Activated T-helper 2 cell treated with anti-CD3 and anti-CD28 coated beads, Interferon-gamma antibody, Interleukin-2, Interleukin-4, amounts not matched to agents 10 μg/mL and 5 μg/mL and 100 μg/mL, durations not matched to agents 14 hours and 24 hours and 36 hours (primary cell): ENCODE measurements at regions of chr4 and their contacts with region 1.

Region 1: DNA sequence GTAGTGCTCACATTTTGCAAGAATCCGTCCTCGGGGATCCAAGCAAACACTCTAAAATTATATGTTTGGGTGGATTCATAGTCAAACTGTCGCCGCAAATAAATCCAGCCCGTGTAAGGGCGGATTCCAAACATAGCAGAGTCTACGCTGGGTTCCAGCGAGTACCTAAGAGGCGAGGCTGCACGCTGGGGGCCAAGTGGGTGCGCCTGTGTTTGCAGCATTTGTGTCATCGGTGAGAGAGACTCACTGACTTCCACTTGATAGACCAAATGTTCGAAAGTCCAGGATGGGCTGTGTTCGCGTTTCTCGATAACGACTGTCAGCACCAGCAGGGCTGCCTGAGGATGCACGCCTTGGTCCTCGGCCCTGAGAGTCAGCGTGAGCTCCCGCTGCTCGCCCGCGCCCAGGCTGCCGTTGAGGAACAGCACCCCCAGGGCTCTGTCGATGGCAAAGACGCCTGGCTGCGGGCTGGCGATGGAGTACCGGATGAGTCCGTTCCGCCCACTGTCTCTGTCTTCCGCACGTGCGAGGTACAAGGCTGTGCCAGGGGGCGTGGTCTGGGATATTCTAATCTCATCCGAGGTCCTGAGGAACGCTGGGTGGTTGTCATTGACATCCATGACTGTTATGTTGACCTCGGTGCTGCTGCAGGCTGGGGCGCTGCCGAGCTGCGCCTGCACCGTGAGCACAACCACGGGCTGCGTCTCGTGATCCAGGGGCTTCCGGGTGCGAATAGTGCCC is 158.7 kb downstream of the DCHS2 start:
- DNase-seq: peak; percentile 48
- H3K4me3 Mint-ChIP-seq: peak overlapping the region; percentile 61
- H3K27ac Mint-ChIP-seq: no peak overlapping the region
- H3K4me1 Mint-ChIP-seq: peaks cover 7% of the 10 kb centered on the region
- H3K27me3 Mint-ChIP-seq: peaks cover 35% of the 10 kb centered on the region

Region 2: GRCh38 chr4:153791746-153792617 is 540.9 kb before region 1 on chr4:
- intact Hi-C with region 1: loop called (anchors 5 kb)
- DNase-seq: no peak
- H3K4me3 Mint-ChIP-seq: no peak overlapping the region
- H3K27ac Mint-ChIP-seq: no peak overlapping the region
- H3K4me1 Mint-ChIP-seq: peaks cover 16% of the 10 kb centered on the region
- H3K27me3 Mint-ChIP-seq: peaks cover 89% of the 10 kb centered on the region

Region 3: DNA sequence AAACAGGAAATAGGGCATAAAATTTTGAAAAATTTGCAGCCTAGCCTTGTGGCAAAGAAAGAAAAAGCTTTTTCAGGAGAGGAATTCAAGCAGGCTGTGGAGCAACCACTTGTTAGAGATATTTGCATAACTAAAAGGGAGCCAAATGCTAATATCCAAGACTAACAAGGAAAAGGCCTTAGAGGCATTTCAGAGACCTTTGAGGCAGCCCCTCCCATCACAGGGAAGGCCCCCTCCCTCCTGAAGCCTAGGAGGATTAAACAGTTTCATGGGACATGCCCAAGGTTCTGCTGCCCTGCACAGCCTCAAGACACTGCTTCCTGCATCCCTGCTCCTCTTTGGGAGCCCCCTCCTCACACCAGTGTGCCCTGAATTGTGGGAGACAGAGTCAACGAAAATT is 268.6 kb before region 1 on chr4:
- intact Hi-C with region 1: no loop called
- DNase-seq: no peak
- H3K4me3 Mint-ChIP-seq: no peak overlapping the region
- H3K27ac Mint-ChIP-seq: no peak overlapping the region
- H3K4me1 Mint-ChIP-seq: no peaks in the 10 kb centered on the region
- H3K27me3 Mint-ChIP-seq: no peaks in the 10 kb centered on the region

Region 4: GRCh38 chr4:154506253-154506652 is 173.4 kb after region 1 on chr4:
- intact Hi-C with region 1: loop called (anchors 5 kb)
- DNase-seq: no peak
- H3K4me3 Mint-ChIP-seq: no peak overlapping the region
- H3K27ac Mint-ChIP-seq: no peak overlapping the region
- H3K4me1 Mint-ChIP-seq: no peaks in the 10 kb centered on the region
- H3K27me3 Mint-ChIP-seq: peaks cover 23% of the 10 kb centered on the region

Region 5: GRCh38 chr4:154618708-154619315 is 286.0 kb after region 1 on chr4:
- intact Hi-C with region 1: loop called (anchors 10 kb)
- DNase-seq: peak; percentile 36
- H3K4me3 Mint-ChIP-seq: no peak overlapping the region
- H3K27ac Mint-ChIP-seq: no peak overlapping the region
- H3K4me1 Mint-ChIP-seq: peaks cover 8% of the 10 kb centered on the region
- H3K27me3 Mint-ChIP-seq: peaks cover 10% of the 10 kb centered on the region

Region 6: DNA sequence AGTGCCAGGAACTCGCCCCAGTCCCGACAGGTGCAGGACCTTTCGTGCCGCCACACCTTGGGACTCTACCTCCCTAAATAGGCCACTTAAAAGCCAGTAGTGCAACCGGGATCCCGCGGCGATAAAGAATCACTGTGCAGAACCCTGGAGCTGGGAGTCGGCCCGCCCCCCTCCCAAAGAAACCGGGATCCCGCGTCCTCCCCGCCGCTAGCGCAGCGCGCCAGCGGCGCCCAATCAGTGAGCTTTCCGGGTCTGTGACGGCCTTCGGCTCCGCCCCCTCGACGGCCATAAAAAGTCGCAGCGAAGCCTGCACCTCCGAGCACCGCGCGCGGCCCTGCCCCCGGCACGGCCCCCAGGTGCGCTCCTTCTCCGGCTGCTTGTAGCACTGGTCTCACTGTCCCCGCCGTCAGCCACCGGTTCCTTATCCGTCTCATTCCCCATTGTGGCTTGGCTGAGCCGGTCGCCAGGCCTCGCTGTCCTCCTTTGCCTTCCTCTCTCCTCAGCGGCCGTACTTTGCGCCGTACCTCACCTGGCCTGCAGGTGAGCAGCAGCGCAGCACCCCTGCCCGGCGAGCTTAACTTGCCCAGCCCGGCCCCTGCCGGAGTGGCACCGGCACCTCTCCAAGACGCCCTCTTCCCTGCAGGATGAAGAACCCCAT is 411.0 kb after region 1 on chr4 and contains the start of gene LRAT:
- intact Hi-C with region 1: loop called (anchors 10 kb)
- DNase-seq: peak; percentile 46
- H3K4me3 Mint-ChIP-seq: peak within 1 kb of the TSS; percentile 82
- H3K27ac Mint-ChIP-seq: no peak within 1 kb of the TSS
- H3K4me1 Mint-ChIP-seq: peaks cover 20% of the 10 kb centered on the region
- H3K27me3 Mint-ChIP-seq: peaks cover 70% of the 10 kb centered on the region
- total RNA-seq, gene LRAT: 0.07 TPM in 1 of 2 replicates, not detected in the other